Right lobe of liver (tissue), 6 donors: ENCODE measurements at regions of chr7 and their contacts with region 1.

Region 1: GRCh38 chr7:37181550-37181932 is 267.1 kb downstream of the ELMO1 start:
- DNase-seq: no peak
- ATAC-seq: no peak
- H3K4me3 ChIP-seq: no peak overlapping the region
- H3K27ac ChIP-seq: no peak overlapping the region
- H3K4me1 ChIP-seq: peaks cover 0 to 9% (median 0%) of the 10 kb centered on the region in 4 donors
- H3K27me3 ChIP-seq: no peaks in the 10 kb centered on the region
- CTCF ChIP-seq: no peak
- POLR2A ChIP-seq: no peak

Region 2: GRCh38 chr7:36423633-36424032 is 757.9 kb before region 1 on chr7:
- intact Hi-C with region 1: no loop called
- DNase-seq: no peak
- ATAC-seq: no peak
- H3K4me3 ChIP-seq: no peak overlapping the region
- H3K27ac ChIP-seq: no peak overlapping the region
- H3K4me1 ChIP-seq: no peaks in the 10 kb centered on the region
- H3K27me3 ChIP-seq: no peaks in the 10 kb centered on the region
- CTCF ChIP-seq: no peak
- POLR2A ChIP-seq: no peak

Region 3: DNA sequence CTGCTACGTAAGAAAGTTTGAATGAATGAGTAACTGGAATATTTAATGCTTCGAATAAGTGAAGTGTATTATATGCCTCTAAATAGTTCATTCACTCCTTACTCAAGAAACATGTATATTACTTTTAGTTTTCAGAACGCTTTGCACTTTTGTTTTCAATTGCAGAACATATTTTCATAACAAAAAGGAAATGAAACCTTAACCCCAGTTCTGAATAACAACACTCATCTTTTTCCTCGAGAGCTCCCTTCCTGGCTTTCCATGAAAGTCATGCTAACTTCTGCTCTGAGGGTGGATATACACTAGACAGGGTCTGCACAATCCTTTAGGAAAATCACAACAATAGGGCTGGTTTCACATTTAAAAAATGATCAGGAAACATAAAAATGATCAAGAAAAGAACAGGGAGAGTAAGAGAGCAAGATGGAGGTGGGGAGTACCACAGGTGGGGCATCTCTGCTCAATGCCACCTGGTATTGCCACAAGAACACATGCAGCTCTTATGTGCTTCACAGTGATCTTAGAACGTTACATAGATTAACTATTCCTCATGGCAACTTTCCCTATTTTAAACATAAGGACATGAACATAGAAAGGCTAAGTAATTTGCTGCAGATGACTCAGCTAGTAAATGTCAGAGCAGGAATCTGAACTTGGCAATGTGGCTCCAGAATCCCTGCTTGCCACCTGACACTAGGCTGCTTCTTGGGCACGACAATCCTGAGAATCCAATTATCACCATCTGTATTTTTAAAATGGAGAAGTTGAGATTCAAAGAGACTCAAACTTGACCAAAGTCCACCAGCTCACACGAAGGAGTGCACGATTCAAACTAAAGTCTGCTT is 237.7 kb before region 1 on chr7:
- intact Hi-C with region 1: no loop called
- DNase-seq: no peak
- ATAC-seq: no peak
- H3K4me3 ChIP-seq: no peak overlapping the region
- H3K27ac ChIP-seq: no peak overlapping the region
- H3K4me1 ChIP-seq: peaks cover 0 to 14% (median 3%) of the 10 kb centered on the region in 4 donors
- H3K27me3 ChIP-seq: no peaks in the 10 kb centered on the region
- CTCF ChIP-seq: no peak
- POLR2A ChIP-seq: no peak

Region 4: DNA sequence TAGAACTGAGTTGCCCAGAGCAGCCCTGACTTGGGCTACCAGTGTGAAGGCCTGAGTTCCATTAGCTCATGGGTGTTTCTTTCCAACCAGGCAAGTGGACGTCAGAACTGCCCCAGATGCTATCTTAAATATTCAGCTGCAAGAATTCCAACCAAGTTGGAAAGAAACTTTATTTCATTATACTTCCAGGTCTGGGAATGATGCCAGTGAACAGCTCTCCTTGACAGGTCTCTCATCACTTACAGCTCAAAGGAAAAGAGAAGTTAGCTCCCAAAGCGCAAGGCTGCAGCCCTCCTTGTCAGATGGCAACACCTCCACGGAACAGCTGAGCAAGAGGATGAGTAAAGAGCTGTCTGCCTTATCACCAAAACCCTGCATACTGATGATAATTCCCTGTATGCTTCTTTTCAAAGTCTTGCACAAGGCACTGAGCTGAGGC is 201.7 kb before region 1 on chr7:
- intact Hi-C with region 1: loop called in 1 of 2 experiments (anchors 10 kb)
- DNase-seq: no peak
- ATAC-seq: no peak
- H3K4me3 ChIP-seq: no peak overlapping the region
- H3K27ac ChIP-seq: no peak overlapping the region
- H3K4me1 ChIP-seq: peaks cover 0 to 31% (median 4%) of the 10 kb centered on the region in 4 donors
- H3K27me3 ChIP-seq: no peaks in the 10 kb centered on the region
- CTCF ChIP-seq: no peak
- POLR2A ChIP-seq: no peak

Region 5: DNA sequence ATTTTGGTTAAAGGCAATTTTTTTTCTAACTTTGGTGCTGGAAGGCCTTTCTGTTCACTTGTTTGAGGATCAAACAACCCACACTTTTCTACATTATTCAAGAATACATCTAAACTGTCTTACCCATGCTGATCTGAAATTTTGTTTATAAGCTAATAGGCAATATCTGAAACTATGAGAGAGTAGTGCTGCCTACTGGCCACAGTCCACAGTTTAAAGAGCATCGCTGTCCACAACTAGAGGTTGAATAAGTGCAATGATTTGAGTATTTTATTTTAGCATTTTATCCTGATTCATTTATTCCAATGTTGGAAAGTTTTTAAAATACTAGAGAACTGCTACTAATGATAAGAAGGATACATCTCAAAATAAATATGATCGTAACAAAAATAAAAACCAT is 39.8 kb before region 1 on chr7:
- intact Hi-C with region 1: no loop called
- DNase-seq: no peak
- ATAC-seq: peak; percentile 32 to 80 (median 55)
- H3K4me3 ChIP-seq: no peak overlapping the region
- H3K27ac ChIP-seq: no peak overlapping the region
- H3K4me1 ChIP-seq: no peaks in the 10 kb centered on the region
- H3K27me3 ChIP-seq: no peaks in the 10 kb centered on the region
- CTCF ChIP-seq: peak in 3 of 4 donors; percentile 15 to 38 (median 29)
- POLR2A ChIP-seq: no peak